Kidney (tissue), 22 donors: ENCODE measurements at regions of chr19 and their contacts with region 1.

Region 1: DNA sequence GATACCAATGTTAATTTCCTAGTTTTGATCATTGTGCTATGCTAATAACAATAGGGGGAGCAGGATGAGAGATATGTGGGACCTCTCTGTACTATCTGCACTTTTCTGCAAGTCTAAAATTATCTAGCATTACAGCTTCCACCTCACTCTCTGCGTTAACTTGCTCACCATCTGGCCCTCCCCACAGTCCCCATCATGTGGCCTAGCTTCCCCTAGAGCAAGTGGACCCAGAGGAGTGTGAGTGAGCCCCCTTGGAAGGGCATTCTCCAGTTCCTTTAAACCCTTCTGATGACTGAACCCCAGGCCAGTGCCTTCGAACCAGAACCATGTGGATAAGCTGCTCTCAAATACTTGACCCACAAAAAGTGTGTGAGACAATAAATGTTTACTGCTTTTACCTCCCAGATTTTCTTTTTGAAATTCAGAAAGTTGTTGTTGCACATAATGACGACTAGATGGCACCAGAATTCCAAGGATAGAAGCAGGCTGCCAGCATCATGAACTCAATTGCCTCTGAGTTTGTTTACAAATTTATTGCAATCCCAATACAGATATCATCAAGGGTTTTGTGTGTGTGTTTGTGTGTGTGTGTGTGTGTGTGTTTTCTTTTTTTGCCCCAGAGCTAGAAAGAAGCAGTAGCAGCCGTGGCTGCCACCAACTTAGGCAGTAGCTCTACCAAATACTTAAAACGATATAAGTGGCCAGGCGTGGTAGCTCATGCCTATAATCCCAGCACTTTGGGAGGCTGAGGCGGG is 49.0 kb upstream of the ZNF780A start:
- DNase-seq: peak in 2 of 5 donors; percentile 55 to 63
- H3K4me3 ChIP-seq: no peak overlapping the region
- H3K27ac ChIP-seq: no peak overlapping the region
- H3K4me1 ChIP-seq: no peaks in the 10 kb centered on the region
- H3K27me3 ChIP-seq: no peaks in the 10 kb centered on the region
- CTCF ChIP-seq: peak; percentile 66

Region 2: DNA sequence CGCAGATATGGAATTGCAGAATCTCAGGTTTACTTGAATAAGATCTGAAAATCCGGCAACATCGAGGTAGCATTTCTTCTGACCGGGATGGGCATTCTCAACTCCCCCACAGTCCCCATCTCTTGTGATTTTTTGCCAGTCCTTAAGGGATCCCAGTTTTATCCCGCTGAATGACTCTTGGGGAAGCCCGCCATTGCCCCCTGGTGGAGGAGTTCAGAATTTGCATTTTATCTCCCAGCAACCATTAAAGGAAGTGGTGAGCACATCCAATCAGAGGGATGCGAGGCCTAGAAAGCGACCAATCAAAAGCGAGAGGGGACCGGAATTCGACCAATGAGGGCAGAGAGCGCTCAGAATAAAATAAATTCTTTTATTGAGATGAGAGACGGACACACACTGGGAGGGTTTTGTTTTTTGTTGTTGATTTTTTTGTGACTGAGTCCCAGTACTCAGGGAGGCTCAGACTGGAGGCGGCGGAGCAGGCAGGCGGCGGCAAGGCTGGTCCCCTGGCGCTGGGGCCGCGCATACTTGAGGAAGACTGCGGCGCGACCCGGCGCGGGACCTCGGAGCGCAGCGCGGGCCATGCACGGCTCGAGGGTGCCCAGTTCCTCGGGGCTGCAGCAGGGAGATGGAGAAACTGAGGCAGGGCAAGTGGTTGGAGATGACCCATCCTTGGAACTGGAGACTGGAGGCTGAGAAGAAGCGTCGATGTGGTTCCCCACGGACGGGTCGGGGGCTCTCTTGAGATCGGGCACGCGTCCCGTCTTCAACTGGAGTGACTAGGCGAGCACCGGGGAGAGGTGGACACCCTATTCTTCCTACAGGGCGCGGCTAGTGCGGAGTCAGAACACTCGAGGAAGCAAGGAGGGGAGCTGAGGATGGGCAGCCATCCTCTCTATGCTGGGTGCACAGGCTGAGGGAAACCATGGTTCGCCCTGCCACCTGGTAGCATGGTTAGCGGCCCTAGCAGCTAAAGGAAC is 82.4 kb after region 1 on chr19:
- intact Hi-C with region 1: loop called (anchors 5 kb)
- DNase-seq: peak in 4 of 5 donors; percentile 80 to 94 (median 88)
- H3K4me3 ChIP-seq: no peak overlapping the region
- H3K27ac ChIP-seq: no peak overlapping the region
- H3K4me1 ChIP-seq: no peaks in the 10 kb centered on the region
- H3K27me3 ChIP-seq: peaks cover 16% of the 10 kb centered on the region
- CTCF ChIP-seq: peak; percentile 90

Region 3: GRCh38 chr19:40257057-40257517 is 117.4 kb after region 1 on chr19:
- intact Hi-C with region 1: no loop called
- DNase-seq: peak in 4 of 5 donors; percentile 41 to 98 (median 66)
- H3K4me3 ChIP-seq: no peak overlapping the region
- H3K27ac ChIP-seq: peak overlapping the region; percentile 79 to 86
- H3K4me1 ChIP-seq: peaks cover 0 to 16% (median 9%) of the 10 kb centered on the region in 3 donors
- H3K27me3 ChIP-seq: no peaks in the 10 kb centered on the region
- CTCF ChIP-seq: no peak